ENCODE measurements at regions of chr1 and their contacts with region 1.

Region 1: DNA sequence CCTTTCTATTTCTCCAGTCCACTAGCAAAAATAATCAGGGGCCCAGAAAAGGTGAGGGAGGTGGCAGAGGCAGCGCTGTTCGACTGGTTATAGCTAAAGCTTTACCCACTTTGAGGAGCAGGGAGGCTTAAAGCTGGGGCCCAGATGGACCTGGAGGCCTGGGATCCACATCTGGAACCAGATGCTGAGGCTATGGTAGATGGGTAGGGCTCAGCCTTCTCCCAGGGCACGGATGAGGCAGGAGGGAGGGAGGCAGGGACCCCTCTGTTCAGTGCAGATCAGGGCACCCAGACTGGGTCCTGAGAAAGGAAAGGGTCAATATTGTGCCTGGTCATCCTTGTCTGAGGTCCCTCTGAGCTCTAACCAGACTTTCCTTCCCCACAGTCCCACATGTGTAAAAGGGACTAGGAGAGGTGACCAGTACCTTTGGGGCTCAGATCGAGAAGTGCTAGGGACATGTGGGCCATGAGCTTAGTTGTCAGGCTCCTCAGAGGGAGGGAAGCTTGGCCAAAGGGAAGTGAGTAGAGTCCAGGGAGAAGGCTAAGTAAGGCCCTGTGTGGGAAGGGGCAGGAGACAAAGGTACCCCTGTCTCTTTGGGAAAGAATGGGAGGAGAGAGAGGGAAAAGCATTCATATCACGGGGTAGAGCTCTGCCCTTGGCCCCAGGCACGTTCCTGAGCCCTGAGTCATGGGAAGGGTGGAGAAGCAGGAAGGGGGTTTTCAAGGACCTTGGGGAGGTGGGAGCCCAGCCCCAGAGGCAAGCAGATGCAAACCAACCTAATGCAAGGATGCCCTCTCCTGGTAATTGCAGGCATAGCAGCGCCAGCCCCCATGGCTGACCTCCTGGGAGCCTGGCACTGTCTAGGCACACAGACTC is 15.4 kb downstream of the LMNA start:
- DNase-seq: peak; percentile 84
- ATAC-seq: no peak
- H3K4me3 Mint-ChIP-seq: no peak overlapping the region
- H3K27ac Mint-ChIP-seq: no peak overlapping the region
- H3K4me1 Mint-ChIP-seq: peaks cover 52% of the 10 kb centered on the region
- H3K27me3 Mint-ChIP-seq: peaks cover 7% of the 10 kb centered on the region

Region 2: DNA sequence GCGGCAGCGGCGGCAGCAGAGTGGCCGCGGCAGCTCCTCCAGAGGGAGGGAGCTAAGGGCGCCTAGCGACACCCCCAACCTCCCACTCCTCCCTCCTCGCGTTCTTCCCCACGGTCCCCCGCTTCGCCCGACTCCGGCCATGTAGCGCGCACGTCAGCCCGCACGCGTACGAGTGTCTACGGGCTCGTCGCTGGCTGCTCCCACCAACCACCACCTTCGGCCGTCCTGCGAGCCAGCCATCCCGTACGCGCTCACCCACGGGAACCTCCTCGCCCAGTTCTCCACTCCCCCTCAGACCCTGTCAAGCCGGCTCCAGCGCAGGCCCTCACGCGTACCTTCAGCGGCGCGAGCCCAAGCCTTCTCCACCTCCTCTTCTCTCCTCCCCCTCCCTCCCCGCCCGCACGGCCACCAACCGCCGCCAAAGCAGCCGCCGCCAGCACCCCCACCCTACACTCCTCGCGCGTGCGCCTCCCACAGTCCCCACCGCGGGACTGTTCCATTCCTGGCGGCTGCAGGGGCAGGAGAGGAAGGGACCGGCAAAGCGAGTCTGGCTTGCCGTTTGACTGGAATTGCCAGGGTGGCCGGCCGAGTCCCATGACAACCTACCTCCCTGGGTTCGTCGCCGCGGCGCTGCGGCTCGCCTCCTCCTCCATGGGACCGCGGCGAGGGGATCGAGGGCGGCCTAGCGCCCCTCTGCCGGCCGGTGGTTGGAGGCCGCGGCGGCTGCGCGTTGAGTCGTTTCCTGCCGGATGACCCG is 441.4 kb before region 1 on chr1 and contains the start of gene YY1AP1:
- CTCF ChIA-PET with region 1: no interaction called
- DNase-seq: peak; percentile 92
- ATAC-seq: peak; percentile 83
- H3K4me3 Mint-ChIP-seq: peak within 1 kb of the TSS; percentile 99
- H3K27ac Mint-ChIP-seq: peak within 1 kb of the TSS; percentile 99
- H3K4me1 Mint-ChIP-seq: peaks cover 62% of the 10 kb centered on the region
- H3K27me3 Mint-ChIP-seq: no peaks in the 10 kb centered on the region
- total RNA-seq, gene YY1AP1: 74.2 to 82.3 TPM

Region 3: DNA sequence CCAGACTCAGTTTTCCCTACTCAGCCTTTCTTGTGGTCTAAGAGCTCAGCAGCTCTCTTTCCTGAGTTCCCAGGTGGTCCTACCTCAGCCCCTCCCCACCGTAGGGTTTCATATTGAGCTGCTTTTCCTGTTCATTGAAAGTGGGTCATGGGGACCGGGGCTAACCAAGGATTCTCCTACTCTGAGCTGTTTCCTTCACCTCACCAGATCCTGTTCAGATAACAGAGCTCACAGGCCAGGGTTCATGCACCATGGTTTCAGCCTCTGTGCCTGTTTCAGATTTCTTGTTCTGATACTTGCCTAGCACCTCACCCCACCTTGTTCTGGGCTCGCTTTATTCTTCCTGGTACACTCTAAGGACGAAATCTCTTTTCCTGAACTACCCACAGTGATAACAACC is 84.9 kb before region 1 on chr1:
- CTCF ChIA-PET with region 1: no interaction called
- DNase-seq: peak; percentile 55
- ATAC-seq: peak; percentile 89
- H3K4me3 Mint-ChIP-seq: no peak overlapping the region
- H3K27ac Mint-ChIP-seq: peak overlapping the region; percentile 37
- H3K4me1 Mint-ChIP-seq: peaks cover 10% of the 10 kb centered on the region
- H3K27me3 Mint-ChIP-seq: no peaks in the 10 kb centered on the region

Region 4: GRCh38 chr1:156065212-156065611 is 64.7 kb before region 1 on chr1:
- CTCF ChIA-PET with region 1: interaction called, 10 read pairs
- DNase-seq: no peak
- ATAC-seq: no peak
- H3K4me3 Mint-ChIP-seq: no peak overlapping the region
- H3K27ac Mint-ChIP-seq: peak overlapping the region; percentile 2
- H3K4me1 Mint-ChIP-seq: peaks cover 18% of the 10 kb centered on the region
- H3K27me3 Mint-ChIP-seq: no peaks in the 10 kb centered on the region

Region 5: GRCh38 chr1:156119503-156120209 is 10.3 kb before region 1 on chr1:
- CTCF ChIA-PET with region 1: interaction called, 127 read pairs
- DNase-seq: no peak
- ATAC-seq: no peak
- H3K4me3 Mint-ChIP-seq: no peak overlapping the region
- H3K27ac Mint-ChIP-seq: peak overlapping the region; percentile 64
- H3K4me1 Mint-ChIP-seq: peaks cover 44% of the 10 kb centered on the region
- H3K27me3 Mint-ChIP-seq: peaks cover 10% of the 10 kb centered on the region

Region 6: DNA sequence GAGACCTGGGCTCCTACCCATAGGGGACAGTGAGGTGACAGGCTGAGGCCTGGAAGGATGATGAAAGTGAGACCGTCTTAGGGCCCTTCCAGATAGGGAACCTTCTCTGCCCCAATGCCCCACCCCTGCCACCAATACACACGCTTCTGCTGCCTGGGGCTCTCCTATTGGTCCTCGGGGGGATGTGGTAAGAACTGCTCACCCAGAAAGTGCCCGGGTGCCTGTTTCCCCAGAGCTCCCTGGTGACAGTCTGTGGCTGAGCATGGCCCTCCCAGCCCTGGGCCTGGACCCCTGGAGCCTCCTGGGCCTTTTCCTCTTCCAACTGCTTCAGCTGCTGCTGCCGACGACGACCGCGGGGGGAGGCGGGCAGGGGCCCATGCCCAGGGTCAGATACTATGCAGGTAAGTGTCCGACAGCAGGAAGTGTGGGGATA is 24.4 kb after region 1 on chr1:
- CTCF ChIA-PET with region 1: interaction called, 10 read pairs
- DNase-seq: peak; percentile 79
- ATAC-seq: peak; percentile 92
- H3K4me3 Mint-ChIP-seq: peak overlapping the region; percentile 70
- H3K27ac Mint-ChIP-seq: peak overlapping the region; percentile 83
- H3K4me1 Mint-ChIP-seq: peaks cover 55% of the 10 kb centered on the region
- H3K27me3 Mint-ChIP-seq: no peaks in the 10 kb centered on the region

Region 7: GRCh38 chr1:156319664-156320063 is 189.7 kb after region 1 on chr1:
- CTCF ChIA-PET with region 1: interaction called, 11 read pairs
- DNase-seq: no peak
- ATAC-seq: no peak
- H3K4me3 Mint-ChIP-seq: no peak overlapping the region
- H3K27ac Mint-ChIP-seq: no peak overlapping the region
- H3K4me1 Mint-ChIP-seq: no peaks in the 10 kb centered on the region
- H3K27me3 Mint-ChIP-seq: no peaks in the 10 kb centered on the region